Gastrocnemius medialis (tissue), 4 donors: ENCODE measurements at regions of chr1 and their contacts with region 1.

Region 1: DNA sequence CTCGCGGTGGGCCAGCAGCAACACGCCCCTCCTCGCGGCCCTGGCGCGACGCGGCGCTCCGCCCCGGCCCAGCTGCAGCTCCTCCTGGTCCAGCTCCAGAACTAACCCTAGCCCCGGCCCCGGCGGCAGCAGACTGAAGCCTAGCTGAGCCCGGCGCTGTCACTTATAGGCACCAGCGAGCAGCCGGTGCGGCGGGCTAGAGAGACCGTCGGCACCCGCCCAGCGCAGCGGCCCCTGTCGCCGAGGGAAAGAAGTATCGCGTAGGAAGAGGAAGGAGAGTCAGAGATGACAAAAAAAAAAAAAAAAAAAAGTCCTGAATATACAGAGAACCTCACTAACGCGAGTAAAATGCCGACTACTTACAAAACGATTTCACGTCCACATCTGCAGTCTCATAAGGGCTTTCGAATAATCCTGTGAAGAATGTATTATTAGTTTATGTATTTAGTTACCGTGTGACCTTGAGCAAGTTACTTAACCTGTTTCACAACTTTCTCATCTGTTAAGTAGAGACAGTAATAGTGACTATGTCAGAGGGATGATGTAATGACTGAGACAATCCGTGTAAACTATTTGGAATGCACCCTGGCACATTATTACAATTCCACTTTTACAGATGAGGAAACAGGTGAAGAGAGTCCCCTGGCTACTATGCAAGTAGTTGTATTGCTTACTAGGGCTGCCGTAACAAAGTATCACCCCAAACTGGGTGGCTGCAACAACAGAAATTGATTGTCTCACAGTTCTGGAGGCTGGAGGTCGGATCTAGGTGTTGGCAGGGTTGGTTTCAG is at the start of gene SLC9A1:
- DNase-seq: peak; percentile 90 to 94
- ATAC-seq: peak; percentile 88 to 93
- H3K4me3 ChIP-seq: peak within 1 kb of the TSS; percentile 64 to 77 (median 69)
- H3K27ac ChIP-seq: peak within 1 kb of the TSS; percentile 86 to 92 (median 90)
- H3K4me1 ChIP-seq: peaks cover 47 to 50% of the 10 kb centered on the region in 2 donors
- H3K27me3 ChIP-seq: no peaks in the 10 kb centered on the region
- CTCF ChIP-seq: peak; percentile 64 to 78 (median 75)
- POLR2A ChIP-seq: peak; percentile 99 to 100
- total RNA-seq, gene SLC9A1: 2.5 to 4.3 (median 3.7) TPM

Region 2: GRCh38 chr1:27111626-27112573 is 43.3 kb before region 1 on chr1:
- in situ Hi-C with region 1: loop called in 2 of 4 experiments (anchors 5 kb)
- intact Hi-C with region 1: loop called (anchors 1 kb)
- DNase-seq: peak; percentile 90 to 97
- ATAC-seq: peak; percentile 95
- H3K4me3 ChIP-seq: no peak overlapping the region
- H3K27ac ChIP-seq: peak overlapping the region; percentile 71 to 83 (median 78)
- H3K4me1 ChIP-seq: peaks cover 29 to 36% of the 10 kb centered on the region in 2 donors
- H3K27me3 ChIP-seq: no peaks in the 10 kb centered on the region
- CTCF ChIP-seq: peak; percentile 12 to 53 (median 37)
- POLR2A ChIP-seq: no peak

Region 3: GRCh38 chr1:27203946-27204345 is 48.8 kb after region 1 on chr1:
- in situ Hi-C with region 1: no loop called
- intact Hi-C with region 1: no loop called
- DNase-seq: no peak
- ATAC-seq: no peak
- H3K4me3 ChIP-seq: no peak overlapping the region
- H3K27ac ChIP-seq: no peak overlapping the region
- H3K4me1 ChIP-seq: no peaks in the 10 kb centered on the region
- H3K27me3 ChIP-seq: no peaks in the 10 kb centered on the region
- CTCF ChIP-seq: no peak
- POLR2A ChIP-seq: no peak

Region 4: DNA sequence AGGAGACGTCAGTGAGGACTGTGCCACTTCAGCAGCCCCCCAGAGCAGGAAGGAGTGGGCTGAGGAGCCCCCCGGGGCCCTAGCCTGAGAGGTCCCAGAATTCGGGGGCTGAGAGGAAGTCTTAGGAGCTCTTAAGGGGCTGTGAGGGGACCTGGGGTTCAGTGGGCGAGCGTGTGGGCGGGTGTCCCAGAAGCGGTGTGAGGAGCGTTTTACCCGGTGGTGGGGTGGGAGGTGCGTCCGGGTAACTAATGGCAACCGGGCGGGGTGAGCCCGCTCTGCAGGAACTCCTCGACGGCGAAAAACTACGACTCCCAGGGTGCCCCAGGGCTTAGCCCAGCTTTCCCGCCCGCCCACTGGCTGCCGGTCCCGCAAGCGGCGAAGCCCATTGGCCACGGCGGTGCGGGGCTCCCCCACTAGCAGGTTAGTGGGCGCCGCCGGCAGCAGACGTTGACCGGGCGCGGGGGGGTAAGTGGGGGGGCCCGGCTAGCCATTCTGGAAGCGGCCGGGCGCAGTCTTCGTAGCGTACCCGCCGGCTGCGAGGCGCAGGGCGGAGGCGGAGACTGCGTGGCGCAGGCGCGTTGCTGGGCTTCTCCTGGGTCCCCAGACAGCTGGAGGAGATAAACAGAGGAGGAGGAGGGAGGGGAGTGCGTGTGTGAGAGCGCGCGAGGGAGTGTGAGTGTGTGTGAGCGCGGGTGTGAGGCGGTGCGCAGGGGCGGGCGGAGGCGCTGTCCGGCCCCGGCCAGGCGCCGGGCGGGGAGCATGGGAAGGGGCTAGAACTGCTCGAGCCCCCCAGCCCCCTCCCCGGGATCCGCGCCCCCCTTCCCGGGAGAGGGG is 79.1 kb after region 1 on chr1 and contains the start of gene WDTC1:
- in situ Hi-C with region 1: no loop called
- intact Hi-C with region 1: loop called (anchors 5 kb)
- DNase-seq: peak; percentile 96 to 97
- ATAC-seq: peak; percentile 96
- H3K4me3 ChIP-seq: peak within 1 kb of the TSS; percentile 69 to 90 (median 76)
- H3K27ac ChIP-seq: peak within 1 kb of the TSS; percentile 83 to 95 (median 89)
- H3K4me1 ChIP-seq: peaks cover 17 to 29% of the 10 kb centered on the region in 2 donors
- H3K27me3 ChIP-seq: no peaks in the 10 kb centered on the region
- CTCF ChIP-seq: no peak
- POLR2A ChIP-seq: peak; percentile 62 to 82
- total RNA-seq, gene WDTC1: 36.8 to 85.5 (median 60.6) TPM

Region 5: GRCh38 chr1:27830621-27831424 is 675.6 kb after region 1 on chr1 and contains the start of gene PPP1R8:
- in situ Hi-C with region 1: no loop called
- intact Hi-C with region 1: loop called (anchors 5 kb)
- DNase-seq: peak; percentile 87 to 91
- ATAC-seq: peak; percentile 98 to 99
- H3K4me3 ChIP-seq: peak within 1 kb of the TSS; percentile 86 to 95 (median 91)
- H3K27ac ChIP-seq: peak within 1 kb of the TSS; percentile 86 to 92 (median 87)
- H3K4me1 ChIP-seq: peaks cover 20 to 36% of the 10 kb centered on the region in 2 donors
- H3K27me3 ChIP-seq: no peaks in the 10 kb centered on the region
- CTCF ChIP-seq: no peak
- POLR2A ChIP-seq: peak; percentile 75 to 80
- total RNA-seq, gene PPP1R8: 18.0 to 27.3 (median 25.0) TPM